GM12878 (cell line): ENCODE measurements at regions of chr9 and their contacts with region 1.

Region 1: DNA sequence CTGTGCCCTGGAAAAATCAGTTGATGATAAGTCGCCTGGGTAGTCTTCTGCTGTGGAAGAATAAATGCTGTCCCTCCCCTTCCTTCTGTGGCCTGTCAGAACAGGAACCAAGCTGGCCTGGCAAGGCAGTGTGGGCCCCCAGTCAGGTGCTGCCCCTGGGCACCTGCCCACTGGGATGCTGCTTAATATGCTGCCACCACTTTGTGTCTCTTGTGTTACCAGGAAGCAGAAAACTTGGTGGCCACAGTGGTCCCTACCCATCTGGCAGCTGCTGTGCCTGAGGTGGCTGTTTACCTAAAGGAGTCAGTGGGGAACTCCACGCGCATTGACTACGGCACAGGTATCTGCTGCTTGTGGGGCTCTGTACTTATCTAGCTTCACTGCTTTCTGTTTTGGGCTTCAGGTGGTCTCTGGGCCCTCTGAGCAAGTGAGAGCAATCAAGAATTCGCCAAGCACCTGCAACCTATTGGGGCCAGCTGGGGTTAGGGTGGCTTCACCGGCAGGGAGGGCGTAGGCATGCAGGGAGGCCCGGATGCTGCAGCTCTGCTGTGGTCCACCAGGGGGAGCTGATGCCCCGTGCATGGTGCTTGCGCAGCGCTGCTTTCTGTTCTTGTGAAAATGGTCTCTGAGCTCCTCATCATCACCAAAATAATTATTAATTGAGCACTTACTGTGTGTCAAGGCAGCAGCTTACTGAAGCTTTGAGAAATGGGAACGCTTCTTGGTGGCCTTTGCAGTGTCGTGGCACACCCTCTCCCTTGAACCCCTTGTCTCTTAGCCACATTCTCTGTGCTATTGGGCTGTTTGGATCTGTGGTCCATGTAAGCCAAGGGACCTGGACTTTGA is 20.3 kb downstream of the PTPA start:
- DNase-seq: no peak
- ATAC-seq: peak; percentile 100
- H3K4me3 ChIP-seq: no peak overlapping the region
- H3K27ac ChIP-seq: no peak overlapping the region; the same call in 1 of the 2 replicates
- H3K4me1 ChIP-seq: no peaks in the 10 kb centered on the region
- H3K27me3 ChIP-seq: no peaks in the 10 kb centered on the region
- CTCF ChIP-seq: peak; percentile 98 to 99 (median 98); a peak in 5 of 6 replicates
- EP300 ChIP-seq: no peak
- POLR2A ChIP-seq: no peak
- RAD21 ChIP-seq: peak; percentile 83

Region 2: DNA sequence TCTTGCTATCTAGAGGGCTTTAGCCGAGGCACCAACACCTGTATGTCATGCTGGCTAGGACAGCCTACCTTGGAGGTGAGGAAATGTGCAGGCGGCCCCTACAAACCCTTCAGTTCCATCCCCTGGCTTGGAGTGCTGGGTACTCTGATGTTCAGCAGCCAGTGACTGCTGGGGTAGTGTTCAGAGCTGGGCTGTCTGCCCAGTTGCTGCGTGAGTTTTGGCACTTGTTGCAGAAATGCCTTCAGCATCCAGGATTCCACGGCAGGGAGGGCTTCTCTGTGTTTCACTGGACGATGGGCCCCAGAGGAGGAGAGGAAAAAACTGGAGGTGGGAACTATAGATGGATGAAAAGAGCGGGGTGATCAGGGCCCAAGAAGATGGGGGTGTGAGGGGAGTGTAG is 845.1 kb before region 1 on chr9:
- CTCF ChIA-PET with region 1: no interaction called
- POLR2A ChIA-PET with region 1: no interaction called
- RAD21 ChIA-PET with region 1: no interaction called
- SMC1A ChIA-PET with region 1: no interaction called
- in situ Hi-C with region 1: no loop called
- intact Hi-C with region 1: no loop called
- DNase-seq: no peak
- ATAC-seq: no peak
- H3K4me3 ChIP-seq: no peak overlapping the region
- H3K27ac ChIP-seq: no peak overlapping the region
- H3K4me1 ChIP-seq: no peaks in the 10 kb centered on the region
- H3K27me3 ChIP-seq: no peaks in the 10 kb centered on the region; a peak in 1 of 4 replicates
- CTCF ChIP-seq: no peak
- EP300 ChIP-seq: no peak
- POLR2A ChIP-seq: no peak
- RAD21 ChIP-seq: no peak

Region 3: DNA sequence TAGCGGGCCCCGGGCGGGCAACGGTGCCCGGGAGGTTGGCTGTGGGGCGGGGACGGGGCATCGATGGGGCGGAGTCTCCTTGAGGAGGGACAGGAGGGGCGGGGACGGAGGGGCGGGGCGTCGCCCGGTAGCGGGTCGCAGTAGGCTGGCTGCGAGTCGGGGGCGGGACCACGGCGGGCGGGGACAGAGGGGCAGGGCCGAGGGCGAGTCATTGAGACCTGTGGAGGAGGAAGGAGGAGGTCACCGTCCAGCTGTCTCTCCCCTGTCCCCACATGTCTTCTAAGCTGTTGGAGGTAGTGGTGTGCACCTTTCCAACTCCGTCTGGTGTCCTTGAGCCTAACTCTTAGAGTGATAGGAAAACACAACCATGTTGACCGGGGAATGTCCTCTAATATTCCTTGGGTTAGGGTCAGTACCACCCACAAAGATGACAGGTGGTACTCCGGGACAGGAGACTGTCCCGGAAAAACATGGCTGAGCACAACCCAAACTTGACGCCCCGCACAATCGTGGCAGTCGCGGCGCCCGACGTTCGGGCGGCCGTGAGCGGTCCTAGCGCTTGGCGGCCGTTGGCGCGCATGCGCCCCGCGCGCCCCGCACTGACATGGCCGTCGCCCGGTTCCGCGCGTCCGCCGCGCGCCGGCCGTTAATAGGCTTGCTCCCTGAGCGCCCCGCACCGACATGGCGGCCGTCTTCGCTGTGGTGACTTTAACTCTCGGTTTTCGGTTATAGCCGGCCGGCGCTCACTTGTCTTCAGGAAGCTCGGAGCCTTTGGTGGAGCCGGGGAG is 20.6 kb before region 1 on chr9 and contains the starts of genes CRAT and PTPA:
- CTCF ChIA-PET with region 1: interaction called, 32 read pairs
- POLR2A ChIA-PET with region 1: interaction called, 7 read pairs
- RAD21 ChIA-PET with region 1: interaction called, 6 read pairs
- SMC1A ChIA-PET with region 1: interaction called, 3 read pairs
- in situ Hi-C with region 1: no loop called
- intact Hi-C with region 1: no loop called
- DNase-seq: peak; percentile 63
- ATAC-seq: peak; percentile 95
- H3K4me3 ChIP-seq: peak within 1 kb of the TSS; percentile 98
- H3K27ac ChIP-seq: peak within 1 kb of the TSS; percentile 92
- H3K4me1 ChIP-seq: peaks cover 7% of the 10 kb centered on the region
- H3K27me3 ChIP-seq: no peaks in the 10 kb centered on the region; a peak in 1 of 4 replicates
- CTCF ChIP-seq: no peak
- EP300 ChIP-seq: no peak
- POLR2A ChIP-seq: peak; percentile 95
- RAD21 ChIP-seq: no peak
- polyA plus RNA-seq, gene CRAT: 0.10 to 0.47 TPM
- polyA plus RNA-seq, gene PTPA: 1.6 to 3.2 TPM

Region 4: GRCh38 chr9:129118799-129119198 is 12.7 kb before region 1 on chr9:
- CTCF ChIA-PET with region 1: interaction called, 32 read pairs
- POLR2A ChIA-PET with region 1: interaction called, 7 read pairs
- RAD21 ChIA-PET with region 1: interaction called, 6 read pairs
- SMC1A ChIA-PET with region 1: interaction called, 3 read pairs
- in situ Hi-C with region 1: no loop called
- intact Hi-C with region 1: no loop called
- DNase-seq: no peak
- ATAC-seq: no peak
- H3K4me3 ChIP-seq: no peak overlapping the region
- H3K27ac ChIP-seq: no peak overlapping the region
- H3K4me1 ChIP-seq: peaks cover 3% of the 10 kb centered on the region; the same call in 1 of the 2 replicates
- H3K27me3 ChIP-seq: no peaks in the 10 kb centered on the region
- CTCF ChIP-seq: no peak
- EP300 ChIP-seq: no peak
- POLR2A ChIP-seq: no peak
- RAD21 ChIP-seq: no peak

Region 5: DNA sequence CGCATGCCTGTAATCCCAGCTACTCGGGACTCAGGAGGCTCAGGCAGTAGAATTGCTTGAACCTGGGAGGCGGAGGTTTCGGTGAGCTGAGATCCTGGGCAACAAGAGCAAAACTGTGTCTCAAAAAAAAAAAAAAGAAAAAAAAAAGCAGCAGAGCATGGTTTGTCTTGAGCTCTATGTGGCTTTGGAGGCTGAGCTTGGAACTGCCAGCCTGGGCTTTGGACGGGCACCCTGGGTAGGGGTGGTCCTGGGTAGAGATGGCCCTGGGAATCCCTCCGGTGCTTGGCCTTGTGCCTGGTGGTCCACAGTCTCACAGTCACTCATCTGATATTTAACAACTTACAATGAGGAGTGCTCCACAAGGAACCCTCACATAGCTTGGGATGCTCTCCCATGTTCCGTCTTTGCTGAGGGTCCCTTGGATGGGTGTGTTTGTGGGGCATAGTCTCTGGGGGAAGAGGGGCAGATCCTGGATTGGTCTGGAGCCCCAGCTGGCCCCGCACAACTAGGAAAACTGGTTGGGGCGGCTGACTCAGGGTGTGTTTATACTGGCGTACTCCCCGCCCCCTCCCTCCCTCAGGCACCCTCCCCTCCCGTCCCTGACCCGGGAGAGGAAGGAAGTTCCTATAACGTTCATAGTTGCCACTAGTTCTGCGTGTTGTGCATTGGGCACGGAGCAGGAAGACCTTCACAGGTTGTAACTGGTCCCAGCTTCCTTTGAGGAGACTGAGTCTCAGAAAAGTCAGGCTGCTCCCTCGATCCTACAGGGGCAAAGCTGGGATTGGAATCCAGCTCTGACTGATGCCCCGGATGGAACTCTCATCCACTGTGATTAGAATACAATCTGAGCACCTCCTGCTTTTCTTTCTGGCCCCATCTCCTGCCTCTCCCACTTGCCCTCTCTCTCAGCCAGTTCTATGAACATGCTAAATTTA is 35.4 kb after region 1 on chr9:
- CTCF ChIA-PET with region 1: interaction called, 70 read pairs
- POLR2A ChIA-PET with region 1: no interaction called
- RAD21 ChIA-PET with region 1: interaction called, 4 read pairs
- SMC1A ChIA-PET with region 1: interaction called, 6 read pairs
- in situ Hi-C with region 1: no loop called
- intact Hi-C with region 1: no loop called
- DNase-seq: no peak
- ATAC-seq: peak; percentile 38
- H3K4me3 ChIP-seq: no peak overlapping the region
- H3K27ac ChIP-seq: no peak overlapping the region
- H3K4me1 ChIP-seq: peaks cover 6% of the 10 kb centered on the region; the same call in 1 of the 2 replicates
- H3K27me3 ChIP-seq: no peaks in the 10 kb centered on the region
- CTCF ChIP-seq: no peak
- EP300 ChIP-seq: no peak
- POLR2A ChIP-seq: no peak
- RAD21 ChIP-seq: no peak

Region 6: DNA sequence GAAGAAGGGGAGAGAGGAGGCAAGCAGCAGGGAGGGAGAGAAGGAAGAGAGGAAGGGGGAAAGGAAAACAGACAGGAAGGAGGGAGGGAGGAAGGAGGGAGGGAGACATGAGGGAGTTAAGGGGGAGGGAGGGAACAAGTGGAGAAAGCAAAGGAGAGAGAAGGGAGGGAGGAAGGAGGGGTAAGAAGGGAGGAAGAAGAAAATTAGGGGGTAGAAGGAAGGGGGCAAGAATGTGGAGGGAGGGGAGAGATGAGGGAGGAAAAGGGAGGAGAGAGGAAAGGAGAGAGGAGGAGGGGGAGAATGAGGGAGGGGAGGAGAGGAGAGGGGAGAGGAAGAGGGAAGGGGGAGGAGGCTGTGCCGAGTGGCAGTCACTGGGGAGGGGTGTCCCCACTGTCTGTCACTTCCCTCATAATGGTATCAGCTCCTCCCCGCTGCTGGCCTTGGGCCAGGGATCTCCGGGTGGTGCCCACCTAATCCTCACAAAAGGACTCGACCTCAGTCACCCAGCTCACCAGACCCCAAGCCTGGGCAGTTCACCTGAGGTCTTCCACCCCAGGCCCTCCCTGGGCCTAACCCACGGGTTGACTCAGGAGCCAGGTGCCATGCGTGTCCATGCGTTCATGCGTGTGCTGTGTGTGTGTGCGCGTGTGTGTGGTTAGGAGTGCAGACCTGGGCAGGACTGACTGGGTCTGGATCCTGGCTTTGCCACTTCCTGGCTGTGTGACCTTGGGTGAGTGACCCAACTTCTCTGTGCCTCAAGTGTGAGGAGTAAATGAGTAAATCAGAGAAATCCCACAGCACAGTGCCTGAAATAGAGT is 471.3 kb after region 1 on chr9:
- CTCF ChIA-PET with region 1: interaction called, 20 read pairs
- POLR2A ChIA-PET with region 1: interaction called, 3 read pairs
- RAD21 ChIA-PET with region 1: interaction called, 11 read pairs
- SMC1A ChIA-PET with region 1: interaction called, 3 read pairs
- in situ Hi-C with region 1: no loop called
- intact Hi-C with region 1: no loop called
- DNase-seq: no peak
- ATAC-seq: peak; percentile 77
- H3K4me3 ChIP-seq: no peak overlapping the region
- H3K27ac ChIP-seq: no peak overlapping the region
- H3K4me1 ChIP-seq: peaks cover 12% of the 10 kb centered on the region
- H3K27me3 ChIP-seq: no peaks in the 10 kb centered on the region
- CTCF ChIP-seq: no peak
- EP300 ChIP-seq: 0 out of 4 replicates have a peak, but pooled peaks of 1 of the 2 experiments have one; percentile 19
- POLR2A ChIP-seq: no peak
- RAD21 ChIP-seq: no peak

Region 7: GRCh38 chr9:129610473-129611301 is 479.2 kb after region 1 on chr9:
- CTCF ChIA-PET with region 1: interaction called, 20 read pairs
- POLR2A ChIA-PET with region 1: no interaction called
- RAD21 ChIA-PET with region 1: interaction called, 11 read pairs
- SMC1A ChIA-PET with region 1: interaction called, 6 read pairs
- in situ Hi-C with region 1: loop called (anchors 5 kb)
- intact Hi-C with region 1: no loop called
- DNase-seq: no peak
- ATAC-seq: peak; percentile 77
- H3K4me3 ChIP-seq: peak overlapping the region; percentile 81; the same call in 1 of the 2 replicates
- H3K27ac ChIP-seq: no peak overlapping the region
- H3K4me1 ChIP-seq: peaks cover 8% of the 10 kb centered on the region
- H3K27me3 ChIP-seq: no peaks in the 10 kb centered on the region
- CTCF ChIP-seq: peak; percentile 80 to 91 (median 90)
- EP300 ChIP-seq: no peak
- POLR2A ChIP-seq: no peak
- RAD21 ChIP-seq: peak; percentile 89

Region 8: GRCh38 chr9:129783516-129784361 is 652.2 kb after region 1 on chr9:
- CTCF ChIA-PET with region 1: interaction called, 12 read pairs
- POLR2A ChIA-PET with region 1: no interaction called
- RAD21 ChIA-PET with region 1: no interaction called
- SMC1A ChIA-PET with region 1: no interaction called
- in situ Hi-C with region 1: loop called (anchors 5 kb)
- intact Hi-C with region 1: loop called (anchors 5 kb)
- DNase-seq: peak; percentile 16
- ATAC-seq: peak; percentile 99
- H3K4me3 ChIP-seq: no peak overlapping the region
- H3K27ac ChIP-seq: no peak overlapping the region
- H3K4me1 ChIP-seq: no peaks in the 10 kb centered on the region
- H3K27me3 ChIP-seq: no peaks in the 10 kb centered on the region; a peak in 1 of 4 replicates
- CTCF ChIP-seq: peak; percentile 88 to 94 (median 89)
- EP300 ChIP-seq: no peak
- POLR2A ChIP-seq: no peak
- RAD21 ChIP-seq: peak; percentile 97